ENCODE measurements at regions of chr2 and their contacts with region 1.

Region 1: GRCh38 chr2:146108993-146109392 is 1589.1 kb upstream of the ZEB2 start:
- DNase-seq: no peak
- H3K4me3 ChIP-seq: no peak overlapping the region
- H3K27ac ChIP-seq: no peak overlapping the region
- H3K4me1 ChIP-seq: no peaks in the 10 kb centered on the region
- H3K27me3 ChIP-seq: no peaks in the 10 kb centered on the region
- CTCF ChIP-seq: no peak
- POLR2A ChIP-seq: no peak

Region 2: DNA sequence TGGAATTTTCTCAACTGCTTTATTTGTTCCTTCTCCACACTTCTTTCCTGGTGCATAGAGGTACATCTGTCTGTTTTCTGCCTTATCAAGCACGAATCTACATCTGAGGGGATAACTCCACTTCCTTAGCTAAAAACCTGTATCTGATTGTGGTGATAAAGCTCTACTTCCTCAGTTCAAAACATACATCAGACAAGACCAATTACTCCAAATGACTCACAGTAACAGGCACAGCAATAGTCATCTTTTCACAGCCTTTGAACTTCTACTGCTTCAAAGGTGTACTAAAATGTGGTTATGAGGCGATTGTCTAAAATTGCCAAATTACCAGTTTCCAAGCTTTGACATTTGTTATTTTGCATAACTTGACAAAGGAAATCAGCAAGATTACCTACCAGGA is 785.5 kb before region 1 on chr2:
- CTCF ChIA-PET with region 1: no interaction called
- POLR2A ChIA-PET with region 1: no interaction called
- dilution Hi-C with region 1: no loop called
- intact Hi-C with region 1: no loop called
- DNase-seq: peak; percentile 45
- H3K4me3 ChIP-seq: no peak overlapping the region
- H3K27ac ChIP-seq: no peak overlapping the region
- H3K4me1 ChIP-seq: peaks cover 2% of the 10 kb centered on the region
- H3K27me3 ChIP-seq: no peaks in the 10 kb centered on the region
- CTCF ChIP-seq: no peak
- POLR2A ChIP-seq: no peak

Region 3: DNA sequence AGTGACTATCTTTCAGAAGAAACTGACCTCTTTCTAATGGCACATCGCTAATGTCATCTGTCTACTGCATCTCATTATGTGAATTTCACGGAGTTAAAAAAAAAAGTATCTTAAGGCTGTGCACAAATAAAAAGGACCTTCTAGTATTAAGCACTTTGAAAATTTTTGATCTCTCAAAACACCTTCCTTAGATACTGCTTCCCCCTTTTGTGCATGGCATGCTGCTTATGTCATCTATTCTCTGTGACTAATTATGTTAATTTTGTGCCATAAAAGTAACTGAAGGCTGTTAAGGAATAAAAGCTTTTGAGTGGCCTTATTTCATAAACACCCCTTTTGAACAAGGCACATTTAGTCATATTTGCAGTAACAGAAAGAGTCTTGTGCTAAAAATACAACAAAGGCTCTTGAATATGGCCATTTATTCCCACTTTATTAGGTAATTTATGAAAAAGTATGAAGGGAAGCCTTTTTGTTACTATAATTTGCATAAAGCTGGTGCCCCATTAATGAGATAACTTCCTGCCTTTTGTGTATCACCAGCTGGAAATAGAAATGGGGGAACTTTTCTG is 177.1 kb before region 1 on chr2:
- CTCF ChIA-PET with region 1: no interaction called
- POLR2A ChIA-PET with region 1: no interaction called
- dilution Hi-C with region 1: no loop called
- intact Hi-C with region 1: no loop called
- DNase-seq: no peak
- H3K4me3 ChIP-seq: no peak overlapping the region
- H3K27ac ChIP-seq: no peak overlapping the region
- H3K4me1 ChIP-seq: no peaks in the 10 kb centered on the region
- H3K27me3 ChIP-seq: no peaks in the 10 kb centered on the region
- CTCF ChIP-seq: no peak
- POLR2A ChIP-seq: no peak

Region 4: GRCh38 chr2:146119586-146119985 is 10.6 kb after region 1 on chr2:
- CTCF ChIA-PET with region 1: interaction called, 3 read pairs
- POLR2A ChIA-PET with region 1: no interaction called
- dilution Hi-C with region 1: no loop called
- intact Hi-C with region 1: loop called (anchors 1 kb)
- DNase-seq: no peak
- H3K4me3 ChIP-seq: no peak overlapping the region
- H3K27ac ChIP-seq: no peak overlapping the region
- H3K4me1 ChIP-seq: no peaks in the 10 kb centered on the region
- H3K27me3 ChIP-seq: no peaks in the 10 kb centered on the region
- CTCF ChIP-seq: no peak
- POLR2A ChIP-seq: no peak

Region 5: GRCh38 chr2:146477383-146477782 is 368.4 kb after region 1 on chr2:
- CTCF ChIA-PET with region 1: no interaction called
- POLR2A ChIA-PET with region 1: no interaction called
- dilution Hi-C with region 1: no loop called
- intact Hi-C with region 1: no loop called
- DNase-seq: no peak
- H3K4me3 ChIP-seq: no peak overlapping the region
- H3K27ac ChIP-seq: no peak overlapping the region
- H3K4me1 ChIP-seq: no peaks in the 10 kb centered on the region
- H3K27me3 ChIP-seq: no peaks in the 10 kb centered on the region
- CTCF ChIP-seq: no peak
- POLR2A ChIP-seq: no peak

Measured in endothelial cell of umbilical vein (primary cell).